Activated naive CD4-positive, alpha-beta T cell treated with anti-CD3 and anti-CD28 coated beads for 36 hours (primary cell): ENCODE measurements at regions of chr9 and their contacts with region 1.

Region 1: GRCh38 chr9:123349691-123350480 is 6.1 kb upstream of the CRB2 start:
- DNase-seq: peak; percentile 77
- H3K4me3 Mint-ChIP-seq: no peak overlapping the region
- H3K27ac Mint-ChIP-seq: no peak overlapping the region
- H3K4me1 Mint-ChIP-seq: peaks cover 3% of the 10 kb centered on the region
- H3K27me3 Mint-ChIP-seq: peaks cover 10% of the 10 kb centered on the region

Region 2: GRCh38 chr9:122464633-122465567 is 885.0 kb before region 1 on chr9:
- CTCF ChIA-PET with region 1: no interaction called
- intact Hi-C with region 1: loop called (anchors 1 kb)
- DNase-seq: peak; percentile 83
- H3K4me3 Mint-ChIP-seq: peak overlapping the region; percentile 72
- H3K27ac Mint-ChIP-seq: peak overlapping the region; percentile 68
- H3K4me1 Mint-ChIP-seq: peaks cover 11% of the 10 kb centered on the region
- H3K27me3 Mint-ChIP-seq: peaks cover 17% of the 10 kb centered on the region

Region 3: GRCh38 chr9:123091459-123091858 is 258.4 kb before region 1 on chr9:
- CTCF ChIA-PET with region 1: interaction called, 22 read pairs
- intact Hi-C with region 1: no loop called
- DNase-seq: no peak
- H3K4me3 Mint-ChIP-seq: no peak overlapping the region
- H3K27ac Mint-ChIP-seq: no peak overlapping the region
- H3K4me1 Mint-ChIP-seq: no peaks in the 10 kb centered on the region
- H3K27me3 Mint-ChIP-seq: no peaks in the 10 kb centered on the region

Region 4: DNA sequence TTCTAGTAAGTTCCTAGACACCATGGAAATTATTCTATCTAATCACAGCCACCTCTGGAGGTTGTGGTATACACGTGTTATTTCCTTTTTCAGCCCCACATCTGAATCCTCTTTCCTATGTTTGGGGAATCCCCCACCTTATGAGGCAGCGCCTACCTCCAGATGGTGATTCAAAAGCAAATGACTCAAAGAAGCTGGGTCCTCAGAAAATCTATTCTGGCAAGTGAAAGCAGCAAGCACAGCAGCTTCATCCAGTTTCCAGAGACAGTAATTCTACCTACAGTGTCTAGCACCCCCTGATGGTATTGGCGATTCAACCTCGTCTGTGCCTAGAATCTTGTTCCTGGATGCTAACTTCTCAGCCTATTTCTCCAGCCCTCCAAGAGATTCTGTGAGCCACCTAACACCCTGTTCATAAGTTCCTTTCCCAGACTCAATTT is 124.5 kb before region 1 on chr9:
- CTCF ChIA-PET with region 1: interaction called, 5 read pairs
- intact Hi-C with region 1: loop called (anchors 1 kb)
- DNase-seq: peak; percentile 82
- H3K4me3 Mint-ChIP-seq: no peak overlapping the region
- H3K27ac Mint-ChIP-seq: peak overlapping the region; percentile 74
- H3K4me1 Mint-ChIP-seq: peaks cover 31% of the 10 kb centered on the region
- H3K27me3 Mint-ChIP-seq: no peaks in the 10 kb centered on the region

Region 5: DNA sequence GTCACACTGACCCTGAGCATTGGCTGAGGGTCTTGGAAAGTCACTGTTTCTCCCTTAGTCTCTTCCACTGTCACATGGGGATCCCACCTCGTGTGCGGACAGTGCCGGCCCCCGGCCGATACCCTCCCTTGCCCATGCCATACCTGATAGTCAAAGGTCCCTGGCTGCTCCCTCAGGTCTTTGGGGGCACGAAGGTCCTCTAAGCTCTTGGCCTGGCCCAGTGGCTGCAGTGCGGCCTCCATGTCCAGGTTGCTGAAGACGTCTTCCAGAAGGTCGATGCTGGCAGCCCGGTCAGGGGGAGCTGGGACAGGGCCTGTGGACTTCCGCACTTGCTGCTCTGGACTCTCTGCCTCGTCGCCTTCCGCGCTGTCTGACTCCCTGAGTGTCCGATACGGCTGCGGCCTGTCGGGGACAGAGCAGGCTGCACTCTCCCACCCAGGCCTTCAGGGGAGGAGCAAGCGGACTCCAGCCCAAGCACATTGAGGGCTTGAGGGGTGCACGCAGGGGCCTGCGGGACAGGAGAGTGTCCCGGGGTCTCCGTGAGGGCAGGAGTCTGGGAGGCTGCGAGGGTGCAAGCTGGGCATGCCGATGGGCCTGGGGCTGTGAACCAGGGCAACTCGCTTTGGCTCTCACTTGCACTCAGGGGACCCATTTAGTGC is 33.8 kb after region 1 on chr9:
- CTCF ChIA-PET with region 1: interaction called, 25 read pairs
- intact Hi-C with region 1: loop called (anchors 1 kb)
- DNase-seq: no peak
- H3K4me3 Mint-ChIP-seq: no peak overlapping the region
- H3K27ac Mint-ChIP-seq: no peak overlapping the region
- H3K4me1 Mint-ChIP-seq: no peaks in the 10 kb centered on the region
- H3K27me3 Mint-ChIP-seq: no peaks in the 10 kb centered on the region

Region 6: DNA sequence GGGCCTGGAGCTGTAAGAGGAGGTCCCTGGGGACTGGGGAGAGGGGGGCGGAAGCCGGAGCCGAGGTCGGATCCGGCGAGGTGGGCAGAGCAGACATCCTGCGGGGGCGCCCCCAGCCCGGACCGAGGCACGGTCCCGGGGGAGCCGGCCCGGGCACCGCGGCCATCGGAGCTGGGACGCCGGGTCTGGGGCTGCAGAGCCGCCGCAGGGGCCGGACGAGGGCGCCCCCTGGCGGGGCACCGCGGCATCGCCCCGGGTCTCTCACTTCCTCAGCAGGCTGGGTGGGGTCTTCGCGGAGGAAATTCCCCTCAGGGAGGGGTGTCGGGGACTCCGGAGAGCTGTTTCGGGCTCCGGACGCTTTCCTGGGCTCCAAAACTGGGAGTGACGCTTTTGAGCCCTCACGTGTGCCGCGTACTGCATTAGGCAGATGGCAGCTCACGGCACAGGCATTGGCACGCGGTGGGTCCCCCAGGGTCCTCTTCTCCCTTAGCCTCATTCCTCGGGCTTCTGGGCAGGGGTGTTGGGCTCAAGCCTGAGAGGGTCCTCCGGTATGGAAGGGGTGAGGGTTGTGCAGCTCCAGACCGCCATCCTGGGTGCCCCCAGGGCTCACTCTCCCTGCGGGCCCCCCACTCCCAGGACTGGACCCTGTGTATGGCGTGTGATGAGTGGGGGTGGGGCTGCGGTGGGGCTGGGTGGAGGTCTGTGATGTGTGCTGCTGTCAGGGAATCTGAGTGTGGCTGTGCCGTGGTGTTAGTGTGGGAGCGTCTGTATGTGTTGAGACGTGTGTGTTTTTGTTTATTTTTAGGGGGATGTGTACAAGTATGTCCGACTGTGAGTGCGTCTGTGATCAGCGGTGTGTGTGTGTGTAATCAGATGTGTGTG is 691.3 kb after region 1 on chr9:
- CTCF ChIA-PET with region 1: no interaction called
- intact Hi-C with region 1: loop called (anchors 1 kb)
- DNase-seq: peak; percentile 50
- H3K4me3 Mint-ChIP-seq: peak overlapping the region; percentile 17
- H3K27ac Mint-ChIP-seq: no peak overlapping the region
- H3K4me1 Mint-ChIP-seq: peaks cover 9% of the 10 kb centered on the region
- H3K27me3 Mint-ChIP-seq: peaks cover 67% of the 10 kb centered on the region